Left colon (tissue), 2 donors: ENCODE measurements at regions of chr2 and their contacts with region 1.

Region 1: DNA sequence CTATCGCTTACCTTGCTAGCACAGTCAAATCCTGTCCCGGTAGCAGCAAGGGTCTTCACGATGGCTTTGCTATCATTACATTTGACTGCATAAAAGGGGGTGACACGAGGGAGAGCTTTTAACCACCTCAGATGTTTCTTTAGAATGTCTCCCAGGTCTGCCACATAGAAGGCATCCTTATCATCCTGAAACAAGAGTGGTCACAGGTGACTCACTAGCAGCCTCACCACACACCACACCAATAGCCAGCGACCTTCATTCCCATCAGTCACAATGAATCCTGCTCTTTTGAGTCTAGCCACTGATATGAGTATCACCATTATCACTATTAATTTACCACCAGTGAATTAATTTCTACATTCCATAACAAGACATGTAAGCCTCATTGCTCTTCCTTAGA is 3.7 kb downstream of the ODC1 start:
- DNase-seq: no peak
- ATAC-seq: no peak

Region 2: DNA sequence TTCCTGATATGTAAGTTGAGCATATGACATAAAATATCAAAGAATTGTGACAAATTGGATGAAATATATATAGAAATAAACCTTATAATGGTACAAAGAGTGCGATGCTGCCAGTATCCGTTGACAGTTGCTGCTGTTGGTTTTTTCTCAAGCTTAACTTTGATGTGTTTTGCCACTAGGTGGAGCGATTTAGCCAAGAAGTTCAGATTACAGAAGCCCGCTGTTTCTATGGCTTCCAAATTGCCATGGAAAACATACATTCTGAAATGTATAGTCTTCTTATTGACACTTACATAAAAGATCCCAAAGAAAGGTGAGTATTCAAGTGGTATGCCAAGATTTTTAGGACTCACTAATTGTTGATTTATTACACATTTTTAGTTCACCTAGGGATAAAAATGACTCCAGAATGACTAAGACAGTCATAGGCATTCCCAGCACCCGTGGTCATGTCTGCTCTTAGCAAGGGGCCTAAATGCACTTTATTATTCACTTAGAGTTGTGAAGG is 319.9 kb before region 1 on chr2:
- intact Hi-C with region 1: loop called in 1 of 2 experiments (anchors 5 kb)
- DNase-seq: no peak
- ATAC-seq: no peak

Region 3: DNA sequence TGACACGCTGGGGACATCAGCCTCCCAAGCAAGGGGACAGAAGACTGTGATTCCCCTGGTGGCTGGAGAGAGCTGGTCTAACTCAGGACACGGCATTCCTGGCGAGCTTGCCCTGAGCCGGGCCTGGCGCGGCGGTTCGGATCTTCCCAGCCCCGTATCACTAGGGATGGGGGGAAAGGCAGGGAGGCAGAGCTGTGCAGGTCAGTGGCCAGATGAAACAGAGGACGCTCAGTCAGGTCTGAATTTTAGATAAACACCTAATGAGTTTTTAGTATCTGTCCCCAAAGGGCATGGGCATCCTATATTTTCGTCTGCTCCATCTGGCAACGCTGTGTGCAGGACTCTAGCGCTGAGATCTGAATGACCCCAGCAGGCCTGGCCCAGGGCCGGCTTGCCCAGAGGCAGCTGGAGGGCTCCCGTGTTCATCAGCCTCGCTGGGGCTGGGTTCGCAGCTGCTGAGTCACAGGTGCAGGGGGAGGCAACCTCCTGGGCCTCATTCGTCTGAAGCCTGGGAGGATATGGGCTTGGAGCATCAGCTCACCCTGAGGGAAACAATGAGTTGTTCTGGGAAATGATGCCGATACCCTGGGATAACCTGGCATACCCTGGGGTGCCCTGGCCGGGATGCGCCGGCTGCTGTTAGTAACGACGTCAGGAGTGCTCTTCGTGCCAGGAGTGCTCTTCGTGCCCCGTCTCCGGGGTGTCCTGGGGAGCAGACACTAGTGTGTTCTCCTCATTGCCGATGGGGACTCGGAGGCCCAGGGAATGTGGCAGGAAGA is 189.9 kb before region 1 on chr2:
- intact Hi-C with region 1: no loop called
- DNase-seq: peak; percentile 4 to 19
- ATAC-seq: no peak

Region 4: GRCh38 chr2:10584796-10585475 is 140.5 kb after region 1 on chr2:
- intact Hi-C with region 1: no loop called
- DNase-seq: no peak
- ATAC-seq: peak; percentile 61